Sigmoid colon (tissue), 7 donors: ENCODE measurements at regions of chr2 and their contacts with region 1.

Region 1: GRCh38 chr2:236180831-236181453 is 12.8 kb upstream of the GBX2 start:
- DNase-seq: peak; percentile 66
- H3K4me3 ChIP-seq: no peak overlapping the region
- H3K27ac ChIP-seq: no peak overlapping the region
- H3K4me1 ChIP-seq: peaks cover 0 to 26% (median 21%) of the 10 kb centered on the region in 4 donors
- H3K27me3 ChIP-seq: peaks cover 41 to 77% (median 55%) of the 10 kb centered on the region in 3 donors
- CTCF ChIP-seq: peak; percentile 13 to 65 (median 56)
- EP300 ChIP-seq: no peak
- POLR2A ChIP-seq: no peak

Region 2: GRCh38 chr2:235766278-235766677 is 414.7 kb before region 1 on chr2:
- intact Hi-C with region 1: loop called (anchors 1 kb)
- DNase-seq: peak; percentile 82
- H3K4me3 ChIP-seq: no peak overlapping the region
- H3K27ac ChIP-seq: peak overlapping the region in 2 of 4 donors; percentile 58 to 65
- H3K4me1 ChIP-seq: peaks cover 0 to 18% (median 0%) of the 10 kb centered on the region in 4 donors
- H3K27me3 ChIP-seq: no peaks in the 10 kb centered on the region
- CTCF ChIP-seq: peak; percentile 52 to 91 (median 90)
- EP300 ChIP-seq: no peak
- POLR2A ChIP-seq: no peak